Activated CD4-positive, alpha-beta memory T cell treated with anti-CD3 and anti-CD28 coated beads for 36 hours (primary cell): ENCODE measurements at regions of chr2 and their contacts with region 1.

Region 1: GRCh38 chr2:46364797-46365457 is 67.7 kb downstream of the EPAS1 start:
- DNase-seq: peak; percentile 33
- H3K4me3 Mint-ChIP-seq: peak overlapping the region; percentile 21
- H3K27ac Mint-ChIP-seq: no peak overlapping the region
- H3K4me1 Mint-ChIP-seq: peaks cover 32% of the 10 kb centered on the region
- H3K27me3 Mint-ChIP-seq: no peaks in the 10 kb centered on the region

Region 2: DNA sequence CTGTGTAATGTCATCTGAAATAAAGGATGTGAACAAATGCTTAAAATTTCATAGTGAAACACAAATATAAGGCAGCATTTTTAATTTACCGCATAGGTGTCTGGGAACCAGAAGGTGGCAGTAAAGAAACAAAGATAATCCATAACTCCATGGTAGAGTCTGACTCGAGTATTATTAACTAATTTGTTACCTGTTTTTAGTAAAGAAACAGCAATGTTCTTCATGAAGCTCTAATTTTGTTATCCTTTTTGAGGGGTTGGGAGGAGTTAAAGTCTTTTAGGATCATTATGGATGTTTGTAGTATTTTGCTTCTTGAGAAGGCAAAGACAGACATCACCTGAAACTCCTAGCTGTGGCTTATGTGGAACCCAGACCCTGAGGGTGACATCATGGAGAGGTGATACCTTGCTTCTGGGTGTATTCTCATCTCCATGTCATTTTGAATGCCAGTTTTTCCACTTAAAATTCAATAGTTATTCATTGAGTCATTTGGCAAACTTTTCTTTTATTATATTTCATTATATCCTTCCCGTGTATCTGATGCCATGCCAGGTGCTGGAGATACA is 353.9 kb before region 1 on chr2:
- CTCF ChIA-PET with region 1: interaction called, 26 read pairs
- POLR2A ChIA-PET with region 1: no interaction called
- intact Hi-C with region 1: loop called (anchors 1 kb)
- DNase-seq: no peak
- H3K4me3 Mint-ChIP-seq: no peak overlapping the region
- H3K27ac Mint-ChIP-seq: no peak overlapping the region
- H3K4me1 Mint-ChIP-seq: peaks cover 11% of the 10 kb centered on the region
- H3K27me3 Mint-ChIP-seq: no peaks in the 10 kb centered on the region

Region 3: DNA sequence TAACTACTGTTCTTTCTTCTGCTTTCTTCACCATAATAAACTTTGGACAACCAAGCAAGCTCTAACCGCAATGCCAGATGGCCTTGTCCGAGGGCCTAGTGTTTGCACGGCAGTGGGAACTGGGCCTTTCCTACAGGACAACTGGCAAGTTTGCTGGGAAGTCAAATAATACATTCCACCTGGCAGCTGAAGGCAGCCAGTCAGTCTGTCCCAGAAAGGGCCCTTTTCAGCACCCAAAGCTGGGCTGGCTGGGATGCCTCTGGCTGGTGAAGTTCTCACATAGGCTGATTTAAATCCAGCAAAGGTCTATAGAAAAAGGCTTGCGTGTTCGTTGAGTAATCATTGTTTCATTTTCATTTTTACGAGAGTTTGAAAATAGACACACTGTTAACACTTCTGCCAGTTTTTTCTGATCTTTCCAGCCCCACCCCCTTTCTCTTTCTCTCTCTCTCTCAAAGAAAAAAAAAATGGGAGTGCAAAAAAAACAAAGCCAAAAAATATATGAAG is 177.8 kb before region 1 on chr2:
- CTCF ChIA-PET with region 1: no interaction called
- POLR2A ChIA-PET with region 1: no interaction called
- intact Hi-C with region 1: loop called (anchors 5 kb)
- DNase-seq: peak; percentile 67
- H3K4me3 Mint-ChIP-seq: no peak overlapping the region
- H3K27ac Mint-ChIP-seq: peak overlapping the region; percentile 84
- H3K4me1 Mint-ChIP-seq: peaks cover 13% of the 10 kb centered on the region
- H3K27me3 Mint-ChIP-seq: no peaks in the 10 kb centered on the region

Region 4: GRCh38 chr2:46296840-46297545 is 67.9 kb before region 1 on chr2 and contains the start of gene EPAS1:
- CTCF ChIA-PET with region 1: interaction called, 3 read pairs
- POLR2A ChIA-PET with region 1: no interaction called
- intact Hi-C with region 1: loop called (anchors 2 kb)
- DNase-seq: peak; percentile 89
- H3K4me3 Mint-ChIP-seq: peak within 1 kb of the TSS; percentile 84
- H3K27ac Mint-ChIP-seq: peak within 1 kb of the TSS; percentile 68
- H3K4me1 Mint-ChIP-seq: peaks cover 20% of the 10 kb centered on the region
- H3K27me3 Mint-ChIP-seq: peaks cover 50% of the 10 kb centered on the region
- total RNA-seq, gene EPAS1: 51.0 to 54.6 TPM

Region 5: DNA sequence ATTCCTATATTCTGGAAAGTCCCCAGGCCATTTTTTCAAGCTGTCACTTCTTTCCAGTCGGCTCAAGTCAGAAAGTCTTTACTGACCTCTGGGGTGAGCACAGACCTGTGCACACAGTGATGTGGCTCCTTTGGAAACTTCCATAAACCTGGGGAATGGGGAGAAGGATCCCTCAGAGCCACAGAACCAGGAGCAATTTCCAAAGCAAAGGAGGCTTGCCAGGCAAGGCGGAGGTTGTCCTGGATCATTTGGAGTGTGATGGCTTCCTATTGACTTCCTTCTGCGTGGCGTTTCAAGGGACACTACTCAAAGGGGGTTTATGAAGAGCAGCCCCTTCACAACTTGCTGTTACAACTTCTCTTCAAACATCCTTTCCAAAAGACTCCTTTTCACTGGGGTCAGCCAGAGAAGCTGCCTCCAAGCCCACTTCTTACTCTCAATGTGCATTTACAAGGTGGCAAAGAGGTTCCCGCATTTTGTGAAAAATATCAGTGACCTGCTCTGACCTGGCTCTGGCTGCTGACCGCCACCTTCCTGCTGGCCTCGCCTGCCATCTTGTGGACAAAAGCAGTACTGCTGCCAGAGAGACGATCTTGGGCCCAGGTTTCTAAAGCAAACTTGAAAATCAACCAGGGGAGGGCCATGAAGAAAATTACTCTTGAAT is 96.2 kb after region 1 on chr2:
- CTCF ChIA-PET with region 1: interaction called, 14 read pairs
- POLR2A ChIA-PET with region 1: no interaction called
- intact Hi-C with region 1: no loop called
- DNase-seq: peak; percentile 85
- H3K4me3 Mint-ChIP-seq: no peak overlapping the region
- H3K27ac Mint-ChIP-seq: no peak overlapping the region
- H3K4me1 Mint-ChIP-seq: peaks cover 7% of the 10 kb centered on the region
- H3K27me3 Mint-ChIP-seq: no peaks in the 10 kb centered on the region

Region 6: GRCh38 chr2:46521215-46521683 is 156.3 kb after region 1 on chr2:
- CTCF ChIA-PET with region 1: no interaction called
- POLR2A ChIA-PET with region 1: no interaction called
- intact Hi-C with region 1: no loop called
- DNase-seq: no peak
- H3K4me3 Mint-ChIP-seq: no peak overlapping the region
- H3K27ac Mint-ChIP-seq: no peak overlapping the region
- H3K4me1 Mint-ChIP-seq: peaks cover 8% of the 10 kb centered on the region
- H3K27me3 Mint-ChIP-seq: no peaks in the 10 kb centered on the region